AG04449 (cell line): ENCODE measurements at regions of chr17 and their contacts with region 1.

Region 1: DNA sequence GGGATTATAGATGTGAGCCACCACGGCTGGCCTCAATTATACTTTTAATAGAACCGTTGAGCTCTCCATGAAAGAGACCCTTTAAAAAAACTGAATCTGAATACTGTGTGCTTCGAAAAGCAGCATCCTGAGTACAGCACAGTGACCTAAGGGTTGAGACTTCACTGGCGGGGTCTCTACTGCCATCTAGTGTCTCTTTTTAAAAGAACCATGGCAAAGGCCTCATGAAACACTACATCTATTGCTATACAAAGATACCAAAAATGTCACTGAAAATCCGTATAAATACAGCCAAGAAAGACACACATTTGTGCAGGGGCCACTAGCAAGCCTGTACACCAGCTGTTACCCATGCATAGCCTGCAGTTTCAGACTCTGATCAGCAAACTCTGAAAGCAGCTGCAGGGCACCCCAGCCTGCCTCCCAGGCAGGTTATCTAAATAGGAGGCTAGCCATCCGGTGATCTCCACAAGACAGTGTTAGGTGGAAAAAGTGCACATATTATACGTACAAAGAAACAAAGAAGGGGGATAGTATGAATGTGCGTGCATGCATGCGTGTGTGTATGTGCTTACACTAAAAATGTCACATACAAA is 35.3 kb downstream of the NPLOC4 start:
- DNase-seq: no peak
- H3K4me3 ChIP-seq: no peak overlapping the region
- CTCF ChIP-seq: peak; percentile 55

Region 2: DNA sequence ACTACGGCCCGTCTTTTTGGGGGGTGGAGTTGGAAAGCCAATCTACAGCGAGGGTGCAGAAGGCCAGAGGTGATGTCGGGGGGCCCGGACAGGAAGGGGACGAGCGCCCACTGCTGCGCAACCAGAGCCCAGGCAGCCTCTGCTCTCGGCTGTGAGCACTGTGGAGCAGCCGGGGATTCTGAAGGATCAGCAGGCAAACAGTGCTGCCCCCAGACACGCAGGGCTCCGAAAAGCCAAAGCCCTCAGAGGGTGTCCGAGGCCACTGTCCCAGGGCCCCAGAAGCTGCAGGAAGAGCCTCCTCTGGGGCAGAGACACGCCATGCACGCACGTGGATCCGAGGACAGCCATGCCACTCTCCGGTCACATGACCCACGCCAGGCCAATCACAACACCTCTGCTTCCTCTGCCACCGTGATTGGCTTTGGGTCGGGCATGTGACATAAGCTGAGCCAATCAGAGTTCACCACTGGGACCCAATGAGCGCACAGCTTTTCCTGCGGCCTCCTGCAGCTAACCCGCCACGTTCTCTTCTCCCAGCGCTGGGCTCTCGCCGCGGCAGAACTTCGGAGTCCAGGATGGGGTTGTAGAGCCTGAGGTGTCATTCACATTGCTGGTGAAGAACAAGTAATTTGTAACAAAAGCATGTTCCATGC is 129.7 kb before region 1 on chr17:
- CTCF ChIA-PET with region 1: no interaction called
- POLR2A ChIA-PET with region 1: no interaction called
- DNase-seq: peak; percentile 59
- H3K4me3 ChIP-seq: peak overlapping the region; percentile 49
- CTCF ChIP-seq: peak; percentile 69

Region 3: GRCh38 chr17:81484195-81484979 is 117.2 kb before region 1 on chr17:
- CTCF ChIA-PET with region 1: interaction called, 14 read pairs
- POLR2A ChIA-PET with region 1: no interaction called
- DNase-seq: no peak
- H3K4me3 ChIP-seq: peak overlapping the region; percentile 57
- CTCF ChIP-seq: peak; percentile 83

Region 4: GRCh38 chr17:81543339-81543675 is 58.3 kb before region 1 on chr17:
- CTCF ChIA-PET with region 1: interaction called, 37 read pairs
- POLR2A ChIA-PET with region 1: interaction called, 3 read pairs
- DNase-seq: no peak
- H3K4me3 ChIP-seq: no peak overlapping the region
- CTCF ChIP-seq: no peak

Region 5: GRCh38 chr17:81566461-81567126 is 35.0 kb before region 1 on chr17:
- CTCF ChIA-PET with region 1: interaction called, 70 read pairs
- POLR2A ChIA-PET with region 1: interaction called, 8 read pairs
- DNase-seq: peak; percentile 96
- H3K4me3 ChIP-seq: peak overlapping the region; percentile 26
- CTCF ChIP-seq: no peak

Region 6: DNA sequence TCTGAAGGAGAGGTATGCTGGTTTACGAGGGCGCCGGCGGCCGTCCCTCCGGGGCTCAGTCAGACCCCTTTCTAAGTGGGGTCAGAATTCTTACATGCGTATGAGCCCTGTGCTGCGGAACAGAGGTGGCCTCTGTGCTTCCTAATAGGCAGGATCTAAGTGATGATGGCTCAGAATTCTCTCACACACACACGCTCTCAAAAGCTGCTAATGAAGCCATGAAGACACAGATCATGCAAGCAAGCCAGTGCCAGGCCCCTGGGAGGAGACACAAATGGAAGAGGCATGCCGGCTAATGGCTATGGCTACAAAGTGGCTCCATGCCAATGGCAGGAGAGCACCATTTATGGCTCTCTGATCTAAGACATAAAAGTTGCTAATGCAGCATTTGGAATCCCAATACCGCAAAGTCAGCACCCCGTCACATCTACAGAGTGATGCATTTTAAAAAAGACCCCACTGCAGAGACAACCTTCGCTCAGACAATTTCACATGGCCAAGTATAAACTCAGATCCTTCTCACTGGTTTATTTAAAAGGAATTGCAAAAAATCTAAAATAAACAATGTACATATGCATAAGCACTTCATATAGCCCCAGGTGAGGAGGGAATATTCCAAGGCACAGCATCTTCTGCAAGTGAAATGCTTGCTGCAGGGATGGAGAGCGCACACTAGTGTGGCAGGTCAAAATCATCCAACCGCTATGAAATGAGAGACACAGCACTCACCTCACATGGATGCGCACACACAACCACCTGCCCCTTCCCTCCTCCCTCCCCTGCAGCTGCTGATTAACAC is 10.7 kb after region 1 on chr17:
- CTCF ChIA-PET with region 1: interaction called, 64 read pairs
- POLR2A ChIA-PET with region 1: interaction called, 3 read pairs
- DNase-seq: no peak
- H3K4me3 ChIP-seq: no peak overlapping the region
- CTCF ChIP-seq: no peak

Region 7: DNA sequence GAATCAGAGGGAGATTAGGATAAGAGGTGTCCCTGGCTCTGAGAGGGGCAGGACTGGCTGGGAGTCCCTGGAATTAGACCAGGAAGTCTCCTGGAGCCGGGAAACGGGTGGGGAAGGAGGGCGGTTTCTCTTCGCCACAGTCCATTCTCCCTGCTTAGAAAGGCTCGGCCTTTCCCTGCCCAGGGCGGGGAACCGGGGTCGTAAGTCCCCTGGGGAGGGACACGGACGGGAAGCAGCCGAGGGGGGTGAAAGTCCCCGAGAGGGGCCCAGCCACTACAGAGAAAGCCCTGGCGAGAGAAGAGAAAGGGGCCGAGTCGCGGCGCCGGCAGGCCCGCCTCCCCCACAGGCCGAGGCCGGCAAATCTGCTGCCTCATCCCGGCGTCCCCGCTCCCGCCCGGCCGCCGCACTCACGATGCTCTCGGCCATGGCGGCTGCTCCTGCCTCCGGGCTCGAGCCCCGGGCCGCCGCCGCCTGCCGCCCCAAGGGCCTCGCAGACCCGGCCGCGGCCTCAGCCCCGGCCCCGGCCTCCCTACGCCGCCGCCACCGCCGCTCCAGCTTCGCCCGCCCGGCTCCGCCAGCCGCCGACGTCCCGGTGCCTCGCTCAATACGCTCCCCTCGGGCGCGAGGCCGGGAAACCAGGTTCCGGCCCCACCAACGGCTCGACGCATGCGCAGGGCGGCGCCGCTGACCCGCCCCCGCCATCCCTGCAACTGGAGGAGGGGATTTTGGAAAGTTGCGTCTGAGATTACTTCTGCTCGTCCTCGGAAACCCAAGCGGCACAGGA is 35.1 kb after region 1 on chr17 and contains the starts of genes NPLOC4 and TSPAN10:
- CTCF ChIA-PET with region 1: interaction called, 11 read pairs
- POLR2A ChIA-PET with region 1: no interaction called
- DNase-seq: peak; percentile 17
- H3K4me3 ChIP-seq: peak within 1 kb of the TSS; percentile 79
- CTCF ChIP-seq: no peak

Region 8: GRCh38 chr17:81792675-81793589 is 191.3 kb after region 1 on chr17:
- CTCF ChIA-PET with region 1: no interaction called
- POLR2A ChIA-PET with region 1: no interaction called
- DNase-seq: no peak
- H3K4me3 ChIP-seq: no peak overlapping the region
- CTCF ChIP-seq: no peak